ENCODE measurements at regions of chr6 and their contacts with region 1.

Region 1: GRCh38 chr6:110949679-110950285 is 8.7 kb upstream of the GTF3C6 start:
- DNase-seq: no peak
- H3K4me3 ChIP-seq: no peak overlapping the region
- H3K27ac ChIP-seq: no peak overlapping the region
- H3K4me1 ChIP-seq: no peaks in the 10 kb centered on the region
- H3K27me3 ChIP-seq: no peaks in the 10 kb centered on the region
- CTCF ChIP-seq: peak in 2 of 3 donors; percentile 24 to 26
- EP300 ChIP-seq: no peak
- POLR2A ChIP-seq: no peak

Region 2: DNA sequence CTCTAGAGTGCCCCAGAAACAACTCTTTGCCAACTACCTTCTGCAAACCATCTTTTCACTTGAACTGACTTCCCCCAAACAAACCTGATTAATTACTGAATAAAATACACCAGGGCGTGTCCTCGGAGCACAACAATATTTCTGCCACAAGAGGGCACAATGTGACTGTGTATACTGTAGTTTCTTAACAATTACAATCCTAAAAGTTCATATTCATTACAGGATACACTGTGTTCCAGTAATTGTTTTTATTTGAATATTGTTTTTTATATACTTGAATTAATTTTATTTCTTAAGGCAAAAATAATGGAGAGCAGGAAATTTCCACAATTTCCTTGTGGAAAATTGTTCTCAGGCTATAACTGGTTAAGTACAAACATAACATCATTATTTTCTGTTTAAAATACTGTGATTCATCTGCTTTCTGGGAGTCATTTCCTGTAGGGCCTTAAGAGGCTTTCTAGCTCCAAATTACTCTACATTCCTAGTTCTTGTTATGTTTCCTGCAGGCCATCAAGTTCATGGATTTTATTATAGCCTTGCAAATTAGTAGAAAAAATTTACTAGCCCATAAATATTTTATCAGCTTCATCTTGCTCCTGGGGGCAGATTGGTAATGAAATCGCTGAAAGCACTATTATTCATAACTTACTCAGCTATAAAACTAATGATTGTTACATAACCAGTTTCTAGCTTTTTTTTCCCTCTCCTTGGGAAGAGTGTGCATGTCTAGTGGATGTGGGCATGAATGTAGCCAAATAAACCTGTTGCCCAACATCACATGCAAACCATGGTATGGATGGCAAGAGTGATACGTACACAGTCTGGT is 421.5 kb before region 1 on chr6:
- intact Hi-C with region 1: loop called in 3 of 4 experiments (anchors 5 to 10 kb)
- DNase-seq: peak in 4 of 5 donors; percentile 31 to 60 (median 40)
- H3K4me3 ChIP-seq: no peak overlapping the region
- H3K27ac ChIP-seq: no peak overlapping the region
- H3K4me1 ChIP-seq: no peaks in the 10 kb centered on the region
- H3K27me3 ChIP-seq: no peaks in the 10 kb centered on the region
- CTCF ChIP-seq: peak in 2 of 3 donors; percentile 76 to 82
- EP300 ChIP-seq: no peak
- POLR2A ChIP-seq: no peak

Region 3: GRCh38 chr6:110682460-110682853 is 267.3 kb before region 1 on chr6:
- intact Hi-C with region 1: loop called (anchors 5 to 10 kb)
- DNase-seq: peak in 3 of 5 donors; percentile 28 to 66 (median 38)
- H3K4me3 ChIP-seq: no peak overlapping the region
- H3K27ac ChIP-seq: no peak overlapping the region
- H3K4me1 ChIP-seq: peaks cover 1% of the 10 kb centered on the region
- H3K27me3 ChIP-seq: no peaks in the 10 kb centered on the region
- CTCF ChIP-seq: peak; percentile 44 to 72 (median 59)
- EP300 ChIP-seq: no peak
- POLR2A ChIP-seq: no peak

Region 4: DNA sequence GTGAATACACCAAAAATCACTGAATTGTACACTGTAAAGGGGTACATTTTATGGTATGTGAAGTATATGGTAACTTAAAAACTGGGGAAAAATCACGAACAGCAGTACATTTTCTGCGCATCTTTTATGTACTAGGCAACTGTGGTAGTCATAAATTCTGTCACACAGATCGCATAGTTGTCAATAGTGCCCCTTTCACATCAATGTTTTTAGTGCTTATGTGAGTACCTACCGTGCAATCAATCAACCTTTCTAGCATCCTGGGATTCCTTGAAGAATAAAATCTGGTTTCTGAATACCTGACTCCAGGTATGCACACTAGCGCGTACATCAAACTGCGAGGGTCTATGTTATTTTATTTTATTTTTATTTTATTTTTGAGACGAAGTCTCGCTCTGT is 31.4 kb after region 1 on chr6:
- intact Hi-C with region 1: no loop called
- DNase-seq: no peak
- H3K4me3 ChIP-seq: peak overlapping the region; percentile 78
- H3K27ac ChIP-seq: peak overlapping the region; percentile 60 to 63
- H3K4me1 ChIP-seq: peaks cover 4% of the 10 kb centered on the region
- H3K27me3 ChIP-seq: no peaks in the 10 kb centered on the region
- CTCF ChIP-seq: no peak
- EP300 ChIP-seq: no peak
- POLR2A ChIP-seq: no peak

Measured in ovary (tissue), 10 donors.